B cell (primary cell): ENCODE measurements at regions of chr7 and their contacts with region 1.

Region 1: DNA sequence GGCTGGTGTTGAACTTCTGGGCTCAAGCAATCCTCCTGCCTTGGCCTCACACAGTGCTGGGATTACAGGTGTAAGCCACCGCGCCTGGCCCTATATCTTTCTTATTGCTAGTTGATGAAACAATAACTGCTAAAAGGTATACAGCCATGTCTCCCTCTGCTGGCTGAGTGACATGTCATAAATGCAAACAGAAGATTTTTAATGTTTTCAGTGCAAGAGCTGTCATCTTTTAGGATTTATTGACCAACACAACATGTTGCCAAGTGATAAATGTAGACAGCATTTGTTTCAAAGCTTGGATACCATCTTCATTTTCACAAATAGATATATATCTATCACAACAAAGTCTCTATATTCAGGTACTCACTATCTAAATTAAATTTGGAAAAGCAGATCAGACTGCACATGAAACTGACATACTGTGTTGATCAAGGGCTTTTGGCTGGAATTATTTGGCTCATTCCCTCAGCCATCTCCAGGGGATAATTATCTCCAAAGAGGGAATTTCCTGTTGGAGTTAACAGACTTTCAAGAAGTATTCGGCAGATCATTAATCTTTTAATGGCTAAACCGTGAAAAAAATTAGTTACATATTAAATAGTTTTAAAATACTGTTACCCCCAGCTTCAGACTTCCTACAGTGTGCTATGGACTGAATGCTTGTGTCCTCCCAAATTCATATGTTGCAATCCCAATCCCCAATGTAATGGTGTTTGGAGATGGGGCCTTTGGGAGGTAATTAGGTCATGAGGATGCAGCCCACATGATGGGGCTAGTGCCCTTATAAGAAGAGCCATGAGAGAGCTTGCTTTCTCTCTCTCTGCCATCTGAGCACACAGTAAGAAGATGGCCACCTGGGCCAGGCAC is 41.3 kb upstream of the SRPK2 start:
- DNase-seq: peak; percentile 68
- ATAC-seq: peak; percentile 67
- H3K4me3 ChIP-seq: no peak overlapping the region
- H3K4me3 Mint-ChIP-seq: no peak overlapping the region
- H3K27ac ChIP-seq: no peak overlapping the region
- H3K27ac Mint-ChIP-seq: peak overlapping the region; percentile 17
- H3K4me1 ChIP-seq: no peaks in the 10 kb centered on the region
- H3K4me1 Mint-ChIP-seq: peaks cover 8% of the 10 kb centered on the region
- H3K27me3 ChIP-seq: no peaks in the 10 kb centered on the region
- H3K27me3 Mint-ChIP-seq: no peaks in the 10 kb centered on the region
- CTCF ChIP-seq: peak; percentile 70

Region 2: DNA sequence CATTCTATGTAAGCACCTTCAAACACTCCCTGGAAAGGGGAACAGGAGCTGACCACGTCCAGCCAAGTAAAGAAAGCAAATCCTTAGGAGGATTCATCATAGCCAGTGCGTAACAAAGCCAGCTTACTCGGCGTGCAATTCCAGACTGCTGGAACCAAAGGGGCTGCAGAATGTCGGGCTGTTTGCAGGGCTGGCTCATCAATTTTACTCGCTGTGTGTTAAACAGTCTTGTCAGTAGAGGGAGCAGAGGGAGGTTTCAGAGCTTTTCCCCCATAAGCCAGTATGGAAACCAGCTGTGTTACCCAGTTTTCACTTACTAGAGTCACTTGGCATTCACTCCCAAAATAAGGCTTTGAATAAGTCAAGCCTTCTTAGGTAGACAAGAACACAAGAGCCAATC is 288.9 kb before region 1 on chr7:
- CTCF ChIA-PET with region 1: interaction called, 22 read pairs
- POLR2A ChIA-PET with region 1: no interaction called
- intact Hi-C with region 1: loop called (anchors 1 kb)
- DNase-seq: peak; percentile 27
- ATAC-seq: no peak
- H3K4me3 ChIP-seq: no peak overlapping the region
- H3K4me3 Mint-ChIP-seq: no peak overlapping the region
- H3K27ac ChIP-seq: no peak overlapping the region
- H3K27ac Mint-ChIP-seq: no peak overlapping the region
- H3K4me1 ChIP-seq: no peaks in the 10 kb centered on the region
- H3K4me1 Mint-ChIP-seq: no peaks in the 10 kb centered on the region
- H3K27me3 ChIP-seq: no peaks in the 10 kb centered on the region
- H3K27me3 Mint-ChIP-seq: no peaks in the 10 kb centered on the region
- CTCF ChIP-seq: no peak

Region 3: GRCh38 chr7:105149827-105150226 is 280.2 kb before region 1 on chr7:
- CTCF ChIA-PET with region 1: interaction called, 22 read pairs
- POLR2A ChIA-PET with region 1: no interaction called
- intact Hi-C with region 1: loop called (anchors 1 kb)
- DNase-seq: no peak
- ATAC-seq: no peak
- H3K4me3 ChIP-seq: no peak overlapping the region
- H3K4me3 Mint-ChIP-seq: no peak overlapping the region
- H3K27ac ChIP-seq: no peak overlapping the region
- H3K27ac Mint-ChIP-seq: no peak overlapping the region
- H3K4me1 ChIP-seq: no peaks in the 10 kb centered on the region
- H3K4me1 Mint-ChIP-seq: no peaks in the 10 kb centered on the region
- H3K27me3 ChIP-seq: no peaks in the 10 kb centered on the region
- H3K27me3 Mint-ChIP-seq: no peaks in the 10 kb centered on the region
- CTCF ChIP-seq: no peak

Region 4: GRCh38 chr7:105285118-105285874 is 144.7 kb before region 1 on chr7:
- CTCF ChIA-PET with region 1: no interaction called
- POLR2A ChIA-PET with region 1: no interaction called
- intact Hi-C with region 1: no loop called
- DNase-seq: no peak
- ATAC-seq: no peak
- H3K4me3 ChIP-seq: no peak overlapping the region
- H3K4me3 Mint-ChIP-seq: no peak overlapping the region
- H3K27ac ChIP-seq: no peak overlapping the region
- H3K27ac Mint-ChIP-seq: no peak overlapping the region
- H3K4me1 ChIP-seq: no peaks in the 10 kb centered on the region
- H3K4me1 Mint-ChIP-seq: peaks cover 29% of the 10 kb centered on the region
- H3K27me3 ChIP-seq: no peaks in the 10 kb centered on the region
- H3K27me3 Mint-ChIP-seq: no peaks in the 10 kb centered on the region
- CTCF ChIP-seq: no peak

Region 5: GRCh38 chr7:105448181-105448580 is 18.2 kb after region 1 on chr7:
- CTCF ChIA-PET with region 1: interaction called, 11 read pairs
- POLR2A ChIA-PET with region 1: no interaction called
- intact Hi-C with region 1: no loop called
- DNase-seq: peak; percentile 62
- ATAC-seq: peak; percentile 79
- H3K4me3 ChIP-seq: peak overlapping the region in 1 of 5 experiments; percentile 32
- H3K4me3 Mint-ChIP-seq: peak overlapping the region; percentile 78
- H3K27ac ChIP-seq: peak overlapping the region; percentile 59 to 81
- H3K27ac Mint-ChIP-seq: peak overlapping the region; percentile 94
- H3K4me1 ChIP-seq: peaks cover 56 to 70% of the 10 kb centered on the region in 2 donors
- H3K4me1 Mint-ChIP-seq: peaks cover 67% of the 10 kb centered on the region
- H3K27me3 ChIP-seq: no peaks in the 10 kb centered on the region
- H3K27me3 Mint-ChIP-seq: no peaks in the 10 kb centered on the region
- CTCF ChIP-seq: no peak

Region 6: GRCh38 chr7:105487579-105488571 is 57.9 kb after region 1 on chr7:
- CTCF ChIA-PET with region 1: interaction called, 13 read pairs
- POLR2A ChIA-PET with region 1: interaction called, 4 read pairs
- intact Hi-C with region 1: loop called (anchors 1 kb)
- DNase-seq: peak; percentile 59
- ATAC-seq: peak; percentile 24
- H3K4me3 ChIP-seq: no peak overlapping the region
- H3K4me3 Mint-ChIP-seq: no peak overlapping the region
- H3K27ac ChIP-seq: no peak overlapping the region
- H3K27ac Mint-ChIP-seq: peak overlapping the region; percentile 61
- H3K4me1 ChIP-seq: peaks cover 0 to 3% of the 10 kb centered on the region in 2 donors
- H3K4me1 Mint-ChIP-seq: peaks cover 5% of the 10 kb centered on the region
- H3K27me3 ChIP-seq: no peaks in the 10 kb centered on the region
- H3K27me3 Mint-ChIP-seq: no peaks in the 10 kb centered on the region
- CTCF ChIP-seq: peak; percentile 75

Region 7: DNA sequence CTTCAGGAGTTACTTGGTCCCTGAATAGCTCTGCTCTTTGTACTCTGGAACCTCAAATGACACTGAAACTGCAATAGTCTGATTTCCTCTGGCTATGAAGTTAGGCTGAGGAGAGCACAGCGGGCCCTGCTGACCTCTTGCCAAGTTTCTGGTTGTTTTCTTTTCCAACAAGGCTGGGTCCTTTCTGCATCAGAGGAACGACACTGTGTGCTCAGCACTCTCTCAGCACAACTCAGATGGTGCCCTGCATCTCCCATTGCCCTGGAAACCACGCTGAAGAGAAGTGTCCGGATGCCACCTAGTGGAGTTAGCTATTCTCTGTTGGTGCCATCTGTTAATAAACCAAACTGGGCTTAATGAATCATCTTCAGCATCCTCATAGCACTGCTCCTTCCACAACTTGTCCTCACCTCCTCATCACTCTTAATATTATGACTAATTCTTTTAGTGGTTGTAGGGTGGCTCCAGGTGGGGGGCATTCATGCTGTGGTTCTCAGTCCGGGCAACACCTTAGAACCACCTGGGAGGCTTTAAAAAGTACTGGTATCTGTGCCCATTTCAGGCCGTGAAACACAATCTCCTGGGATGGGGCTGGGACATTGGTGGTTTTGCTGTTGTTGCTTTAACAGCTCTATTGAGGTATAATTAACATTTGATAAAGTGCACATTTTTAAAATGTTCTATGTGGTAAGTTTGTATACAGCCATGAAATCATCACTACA is 159.5 kb after region 1 on chr7:
- CTCF ChIA-PET with region 1: interaction called, 7 read pairs
- POLR2A ChIA-PET with region 1: no interaction called
- intact Hi-C with region 1: loop called (anchors 5 kb)
- DNase-seq: peak; percentile 66
- ATAC-seq: peak; percentile 90
- H3K4me3 ChIP-seq: no peak overlapping the region
- H3K4me3 Mint-ChIP-seq: no peak overlapping the region
- H3K27ac ChIP-seq: no peak overlapping the region
- H3K27ac Mint-ChIP-seq: peak overlapping the region; percentile 39
- H3K4me1 ChIP-seq: peaks cover 9 to 16% of the 10 kb centered on the region in 2 donors
- H3K4me1 Mint-ChIP-seq: peaks cover 30% of the 10 kb centered on the region
- H3K27me3 ChIP-seq: no peaks in the 10 kb centered on the region
- H3K27me3 Mint-ChIP-seq: no peaks in the 10 kb centered on the region
- CTCF ChIP-seq: peak; percentile 65